Activated T-helper 1 cell treated with anti-CD3 and anti-CD28 coated beads, Interleukin-12 subunit alpha, Interleukin-12 subunit beta, Interleukin-2, Interleukin-4 antibody, amounts not matched to agents 30 ng/mL and 10 ng/mL and 1 ng/mL, durations not matched to agents 14 hours and 24 hours and 36 hours (primary cell): ENCODE measurements at regions of chr22 and their contacts with region 1.

Region 1: GRCh38 chr22:21867528-21868266 is at the start of gene MAPK1:
- DNase-seq: peak; percentile 89
- H3K4me3 Mint-ChIP-seq: peak within 1 kb of the TSS; percentile 94
- H3K27ac Mint-ChIP-seq: peak within 1 kb of the TSS; percentile 95
- H3K4me1 Mint-ChIP-seq: peaks cover 41% of the 10 kb centered on the region
- H3K27me3 Mint-ChIP-seq: peaks cover 15% of the 10 kb centered on the region
- total RNA-seq, gene MAPK1: 80.2 and 91.3 TPM in 2 replicates

Region 2: DNA sequence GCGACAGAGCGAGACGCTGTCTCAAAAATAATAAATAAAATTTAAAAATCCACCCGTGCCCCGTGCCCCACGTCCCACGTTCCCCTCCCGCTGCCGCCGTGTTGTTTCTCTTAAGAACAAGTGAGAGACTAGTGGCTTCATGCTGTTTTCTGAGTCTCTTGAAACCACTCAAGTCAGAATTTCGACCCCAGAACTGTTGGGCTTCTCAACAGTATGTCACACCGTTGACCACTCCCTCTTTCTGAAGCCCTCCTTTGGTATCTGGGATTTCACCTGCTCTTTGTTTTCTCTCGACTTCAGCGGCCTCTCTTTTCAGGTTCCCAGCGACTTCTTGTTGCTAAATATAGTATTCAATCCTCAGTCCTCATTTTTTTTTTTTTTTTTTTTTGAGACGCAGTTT is 200.9 kb before region 1 on chr22:
- intact Hi-C with region 1: loop called (anchors 5 kb)
- DNase-seq: no peak
- H3K4me3 Mint-ChIP-seq: peak overlapping the region; percentile 99
- H3K27ac Mint-ChIP-seq: peak overlapping the region; percentile 97
- H3K4me1 Mint-ChIP-seq: peaks cover 30% of the 10 kb centered on the region
- H3K27me3 Mint-ChIP-seq: no peaks in the 10 kb centered on the region

Region 3: GRCh38 chr22:21735200-21736076 is 132.3 kb before region 1 on chr22 and contains the start of gene YPEL1:
- intact Hi-C with region 1: loop called (anchors 1 kb)
- DNase-seq: peak; percentile 96
- H3K4me3 Mint-ChIP-seq: peak within 1 kb of the TSS; percentile 85
- H3K27ac Mint-ChIP-seq: peak within 1 kb of the TSS; percentile 85
- H3K4me1 Mint-ChIP-seq: peaks cover 32% of the 10 kb centered on the region
- H3K27me3 Mint-ChIP-seq: peaks cover 19% of the 10 kb centered on the region
- total RNA-seq, gene YPEL1: 0.34 and 0.71 TPM in 2 replicates

Region 4: GRCh38 chr22:21766691-21767462 is 100.8 kb before region 1 on chr22:
- intact Hi-C with region 1: loop called (anchors 1 kb)
- DNase-seq: peak; percentile 72
- H3K4me3 Mint-ChIP-seq: peak overlapping the region; percentile 55
- H3K27ac Mint-ChIP-seq: peak overlapping the region; percentile 73
- H3K4me1 Mint-ChIP-seq: peaks cover 79% of the 10 kb centered on the region
- H3K27me3 Mint-ChIP-seq: no peaks in the 10 kb centered on the region

Region 5: GRCh38 chr22:21816787-21817496 is 50.8 kb before region 1 on chr22:
- intact Hi-C with region 1: loop called (anchors 1 kb)
- DNase-seq: peak; percentile 42
- H3K4me3 Mint-ChIP-seq: peak overlapping the region; percentile 65
- H3K27ac Mint-ChIP-seq: peak overlapping the region; percentile 96
- H3K4me1 Mint-ChIP-seq: peaks cover 47% of the 10 kb centered on the region
- H3K27me3 Mint-ChIP-seq: no peaks in the 10 kb centered on the region

Region 6: DNA sequence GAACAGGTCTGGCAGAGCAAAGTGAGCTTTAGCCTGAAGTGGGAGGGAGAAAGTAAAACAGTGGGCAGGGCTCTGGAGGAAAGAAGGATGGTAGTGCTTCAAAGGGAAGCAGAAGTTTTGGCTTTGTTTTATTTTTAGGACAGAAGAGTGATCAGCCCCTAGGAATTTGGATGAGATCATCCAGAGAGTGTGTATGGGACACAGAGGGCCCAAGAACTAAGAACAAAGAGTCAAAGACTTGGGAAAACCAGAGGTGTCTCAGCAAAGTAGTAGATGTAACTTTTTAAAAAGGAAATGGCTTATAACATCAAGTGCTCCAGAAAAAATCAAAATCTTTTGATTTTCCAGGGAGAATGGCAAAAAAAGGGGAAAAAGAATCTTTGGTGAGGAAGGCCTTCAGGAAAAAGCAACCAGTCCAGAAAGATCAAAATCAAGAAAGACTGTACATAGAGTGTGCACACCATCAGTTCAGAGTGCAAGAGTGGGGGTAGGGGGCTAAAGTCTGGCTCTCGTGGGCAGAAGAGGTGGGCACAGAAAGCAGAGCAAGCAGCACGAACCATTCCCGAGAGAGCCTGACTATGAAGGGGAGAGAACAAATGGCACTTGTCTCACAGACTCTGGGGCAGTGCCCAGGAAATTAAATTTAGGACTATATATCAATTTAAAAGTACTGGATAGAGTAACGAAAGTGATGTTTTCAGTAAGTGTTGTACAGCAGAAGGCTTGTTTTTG is 30.3 kb before region 1 on chr22:
- intact Hi-C with region 1: no loop called
- DNase-seq: no peak
- H3K4me3 Mint-ChIP-seq: no peak overlapping the region
- H3K27ac Mint-ChIP-seq: no peak overlapping the region
- H3K4me1 Mint-ChIP-seq: peaks cover 28% of the 10 kb centered on the region
- H3K27me3 Mint-ChIP-seq: no peaks in the 10 kb centered on the region

Region 7: DNA sequence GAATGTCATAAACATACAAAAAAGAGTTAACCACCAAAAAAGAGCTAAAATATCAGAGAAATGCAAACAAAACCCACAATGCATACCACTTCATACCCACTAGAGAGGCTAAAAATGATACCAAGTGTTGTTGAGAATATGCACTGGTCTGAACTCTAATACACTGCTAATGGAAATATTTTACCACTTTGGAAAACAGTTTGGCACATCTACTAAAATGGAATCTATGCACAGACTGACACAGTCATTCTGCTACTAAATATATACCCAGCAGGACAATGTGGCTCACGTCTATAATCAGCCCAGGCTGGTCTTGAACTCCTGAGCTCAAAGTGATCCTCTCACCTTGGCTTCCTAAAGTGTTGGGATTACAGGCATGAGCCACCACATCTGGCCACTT is 18.2 kb before region 1 on chr22:
- intact Hi-C with region 1: no loop called
- DNase-seq: no peak
- H3K4me3 Mint-ChIP-seq: no peak overlapping the region
- H3K27ac Mint-ChIP-seq: no peak overlapping the region
- H3K4me1 Mint-ChIP-seq: peaks cover 4% of the 10 kb centered on the region
- H3K27me3 Mint-ChIP-seq: no peaks in the 10 kb centered on the region

Region 8: GRCh38 chr22:21917181-21917958 is 49.7 kb after region 1 on chr22:
- intact Hi-C with region 1: no loop called
- DNase-seq: no peak
- H3K4me3 Mint-ChIP-seq: no peak overlapping the region
- H3K27ac Mint-ChIP-seq: no peak overlapping the region
- H3K4me1 Mint-ChIP-seq: no peaks in the 10 kb centered on the region
- H3K27me3 Mint-ChIP-seq: no peaks in the 10 kb centered on the region

Region 9: GRCh38 chr22:22123118-22123959 is 255.6 kb after region 1 on chr22:
- intact Hi-C with region 1: no loop called
- DNase-seq: no peak
- H3K4me3 Mint-ChIP-seq: no peak overlapping the region
- H3K27ac Mint-ChIP-seq: no peak overlapping the region
- H3K4me1 Mint-ChIP-seq: no peaks in the 10 kb centered on the region
- H3K27me3 Mint-ChIP-seq: peaks cover 28% of the 10 kb centered on the region